Naive thymus-derived CD4-positive, alpha-beta T cell (primary cell): ENCODE measurements at regions of chr1 and their contacts with region 1.

Region 1: DNA sequence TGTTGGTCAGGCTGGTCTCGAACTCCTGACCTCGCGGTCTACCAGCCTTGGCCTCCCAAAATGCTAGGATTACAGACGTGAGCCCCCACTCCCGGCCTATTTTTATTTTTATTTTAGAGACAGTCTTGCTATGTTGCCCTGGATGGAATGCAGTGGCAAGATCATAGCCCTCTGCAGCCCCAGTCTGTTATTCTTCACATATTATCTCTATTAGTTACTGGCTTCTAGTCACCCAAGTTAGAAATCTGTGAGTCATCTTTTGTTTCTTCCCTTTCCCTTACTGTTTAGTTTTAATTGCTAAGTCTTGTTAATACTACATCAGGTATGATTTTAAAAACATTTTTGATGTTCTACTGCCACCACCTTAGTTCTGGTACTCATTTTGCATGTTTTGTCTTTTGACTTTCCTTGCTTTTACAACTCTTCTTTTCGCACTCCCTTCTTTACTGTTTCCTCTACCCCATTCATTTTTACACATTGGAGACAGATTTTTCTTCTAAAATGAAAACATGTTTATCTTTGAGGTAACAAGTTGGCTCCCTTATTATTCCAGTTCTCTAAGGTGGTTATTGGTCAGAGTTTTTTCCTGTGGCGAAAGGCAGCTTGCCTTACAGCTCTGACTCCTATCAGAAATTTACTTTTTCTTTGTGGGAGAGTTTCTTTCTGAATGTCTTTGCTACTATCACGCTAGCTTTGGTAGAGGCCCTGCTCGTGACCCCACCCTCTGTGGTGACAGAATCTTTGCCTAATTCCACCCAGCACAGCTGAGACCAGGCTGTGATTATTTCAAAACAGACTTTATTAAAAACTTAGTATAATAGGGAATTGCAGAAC is 19.5 kb downstream of the ZMYM4 start:
- DNase-seq: no peak
- ATAC-seq: no peak
- H3K4me3 ChIP-seq: no peak overlapping the region
- H3K4me3 Mint-ChIP-seq: peak overlapping the region in 7 of 10 donors; percentile 7 to 63 (median 9)
- H3K27ac ChIP-seq: no peak overlapping the region
- H3K27ac Mint-ChIP-seq: peak overlapping the region in 7 of 9 donors; percentile 14 to 78 (median 51)
- H3K4me1 ChIP-seq: peaks cover 0 to 17% of the 10 kb centered on the region in 2 donors
- H3K4me1 Mint-ChIP-seq: peaks cover 25 to 63% (median 53%) of the 10 kb centered on the region in 7 donors
- H3K27me3 ChIP-seq: no peaks in the 10 kb centered on the region
- H3K27me3 Mint-ChIP-seq: no peaks in the 10 kb centered on the region

Region 2: DNA sequence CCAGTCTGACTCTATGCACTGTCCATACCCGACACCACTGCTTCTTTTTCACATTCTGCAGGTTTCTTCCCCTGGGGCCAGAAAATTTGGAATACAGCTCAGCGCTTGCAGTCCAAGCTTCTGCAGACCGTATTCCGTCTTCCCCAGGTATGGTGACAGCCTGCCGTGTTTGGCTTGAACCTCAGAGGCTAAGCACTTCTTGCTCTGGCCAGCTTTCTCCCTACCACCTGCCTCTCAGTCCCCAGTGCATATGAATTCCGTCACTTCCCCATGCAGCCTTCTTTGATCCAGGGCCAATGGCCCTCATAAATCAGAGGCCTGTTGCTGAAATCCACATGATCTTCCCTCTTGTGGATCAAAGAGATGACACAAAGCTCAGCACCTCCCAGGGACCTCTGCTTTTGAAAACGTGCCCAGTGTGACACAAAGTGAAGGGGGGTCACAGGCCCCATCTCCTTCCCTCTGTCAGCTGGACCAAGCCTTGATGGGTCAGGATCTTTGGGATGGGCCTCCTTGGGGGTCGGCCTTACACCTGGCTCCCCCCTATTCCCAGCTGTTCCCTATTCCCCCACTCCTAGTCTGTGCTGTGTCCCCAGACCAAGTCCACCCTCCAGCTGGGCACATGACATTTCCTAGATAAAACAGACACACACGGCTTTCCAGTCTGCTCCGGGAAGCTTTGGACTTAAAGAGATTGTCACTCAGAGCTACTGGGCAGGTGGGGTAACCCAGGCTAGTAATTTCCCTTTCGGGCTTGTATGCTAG is 1357.5 kb before region 1 on chr1:
- CTCF ChIA-PET with region 1: no interaction called
- POLR2A ChIA-PET with region 1: no interaction called
- intact Hi-C with region 1: no loop called
- DNase-seq: no peak
- ATAC-seq: no peak
- H3K4me3 ChIP-seq: no peak overlapping the region
- H3K4me3 Mint-ChIP-seq: no peak overlapping the region
- H3K27ac ChIP-seq: no peak overlapping the region
- H3K27ac Mint-ChIP-seq: no peak overlapping the region
- H3K4me1 ChIP-seq: no peaks in the 10 kb centered on the region
- H3K4me1 Mint-ChIP-seq: no peaks in the 10 kb centered on the region
- H3K27me3 ChIP-seq: no peaks in the 10 kb centered on the region
- H3K27me3 Mint-ChIP-seq: peaks cover 2 to 47% (median 33%) of the 10 kb centered on the region in 5 donors

Region 3: GRCh38 chr1:35268282-35269200 is 19.5 kb before region 1 on chr1 and contains the start of gene ZMYM4:
- CTCF ChIA-PET with region 1: no interaction called
- POLR2A ChIA-PET with region 1: interaction called, 9 read pairs
- intact Hi-C with region 1: loop called in 1 of 2 experiments (anchors 2 kb)
- DNase-seq: peak; percentile 67 to 91 (median 87)
- ATAC-seq: peak; percentile 96
- H3K4me3 ChIP-seq: peak within 1 kb of the TSS; percentile 58
- H3K4me3 Mint-ChIP-seq: peak within 1 kb of the TSS; percentile 78 to 98 (median 90)
- H3K27ac ChIP-seq: peak within 1 kb of the TSS; percentile 88
- H3K27ac Mint-ChIP-seq: peak within 1 kb of the TSS; percentile 80 to 99 (median 93)
- H3K4me1 ChIP-seq: peaks cover 6 to 20% of the 10 kb centered on the region in 2 donors
- H3K4me1 Mint-ChIP-seq: peaks cover 22 to 44% (median 40%) of the 10 kb centered on the region in 7 donors
- H3K27me3 ChIP-seq: no peaks in the 10 kb centered on the region
- H3K27me3 Mint-ChIP-seq: peaks cover 0 to 5% (median 0%) of the 10 kb centered on the region in 5 donors
- total RNA-seq, gene ZMYM4: 32.1 to 52.9 (median 45.6) TPM